ENCODE measurements at regions of chr10 and their contacts with region 1.

Region 1: GRCh38 chr10:9209105-9209798 is 1154.8 kb downstream of the GATA3 start:
- DNase-seq: peak; percentile 60
- ATAC-seq: peak; percentile 84
- H3K4me3 ChIP-seq: no peak overlapping the region
- H3K27ac ChIP-seq: no peak overlapping the region
- H3K4me1 ChIP-seq: no peaks in the 10 kb centered on the region
- H3K27me3 ChIP-seq: no peaks in the 10 kb centered on the region
- CTCF ChIP-seq: peak; percentile 84
- POLR2A ChIP-seq: no peak
- RAD21 ChIP-seq: peak; percentile 82

Region 2: GRCh38 chr10:7872041-7872442 is 1337.2 kb before region 1 on chr10:
- CTCF ChIA-PET with region 1: interaction called, 6 read pairs
- POLR2A ChIA-PET with region 1: no interaction called
- dilution Hi-C with region 1: no loop called
- in situ Hi-C with region 1: loop called (anchors 5 kb)
- intact Hi-C with region 1: loop called (anchors 1 kb)
- DNase-seq: peak; percentile 11
- ATAC-seq: no peak
- H3K4me3 ChIP-seq: 0 out of 2 replicates have a peak overlapping the region, but pooled peaks have one; percentile 34
- H3K27ac ChIP-seq: no peak overlapping the region
- H3K4me1 ChIP-seq: no peaks in the 10 kb centered on the region
- H3K27me3 ChIP-seq: no peaks in the 10 kb centered on the region
- CTCF ChIP-seq: peak; percentile 86
- POLR2A ChIP-seq: no peak
- RAD21 ChIP-seq: peak; percentile 85